ENCODE measurements at regions of chr3 and their contacts with region 1.

Region 1: GRCh38 chr3:46970391-46971091 is 6.0 kb downstream of the CCDC12 start:
- DNase-seq: peak; percentile 48 to 74
- ATAC-seq: peak; percentile 79 to 88 (median 84)
- H3K4me3 ChIP-seq: peak overlapping the region; percentile 11
- H3K27ac ChIP-seq: peak overlapping the region; percentile 71
- H3K4me1 ChIP-seq: peaks cover 90% of the 10 kb centered on the region
- H3K27me3 ChIP-seq: no peaks in the 10 kb centered on the region
- CTCF ChIP-seq: no peak

Region 2: DNA sequence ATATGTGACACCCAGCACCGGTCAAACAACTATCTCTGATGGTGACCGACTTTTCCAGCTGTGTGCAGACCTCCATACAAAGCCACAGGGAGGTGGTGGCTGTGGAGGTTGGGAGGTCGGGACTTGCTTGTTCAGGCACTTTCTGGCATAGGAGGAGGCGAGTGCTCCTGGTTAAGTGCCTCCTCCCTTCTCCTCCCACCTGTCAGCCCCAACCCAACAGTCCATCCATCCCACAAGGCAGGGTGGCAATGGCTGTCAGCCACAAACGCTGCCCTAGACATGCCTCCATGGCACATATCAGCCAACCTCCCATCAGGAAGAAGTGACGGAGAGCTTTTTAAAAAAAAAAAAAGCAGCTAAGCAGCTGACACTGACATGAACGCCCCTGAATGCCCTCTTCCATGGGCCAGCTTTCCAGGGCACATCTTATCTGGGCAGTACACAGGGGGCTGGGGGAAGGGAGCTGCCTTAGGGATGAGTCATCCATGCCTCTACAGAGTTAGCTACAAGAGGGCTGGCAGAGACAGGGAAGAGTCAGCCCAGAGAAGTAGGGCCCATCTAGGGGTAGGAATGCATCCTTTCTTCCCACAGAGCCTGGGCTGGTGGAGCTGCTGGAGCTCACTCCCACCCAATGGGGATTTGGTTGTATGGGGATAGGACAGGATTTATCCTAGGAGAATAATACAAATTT is 35.2 kb before region 1 on chr3:
- intact Hi-C with region 1: loop called (anchors 5 kb)
- DNase-seq: peak; percentile 83 to 93
- ATAC-seq: peak; percentile 92 to 95 (median 94)
- H3K4me3 ChIP-seq: no peak overlapping the region
- H3K27ac ChIP-seq: peak overlapping the region; percentile 77
- H3K4me1 ChIP-seq: peaks cover 89% of the 10 kb centered on the region
- H3K27me3 ChIP-seq: no peaks in the 10 kb centered on the region
- CTCF ChIP-seq: peak; percentile 68

Measured in psoas muscle (tissue), 8 donors.